A673 (cell line): ENCODE measurements at regions of chr12 and their contacts with region 1.

Region 1: DNA sequence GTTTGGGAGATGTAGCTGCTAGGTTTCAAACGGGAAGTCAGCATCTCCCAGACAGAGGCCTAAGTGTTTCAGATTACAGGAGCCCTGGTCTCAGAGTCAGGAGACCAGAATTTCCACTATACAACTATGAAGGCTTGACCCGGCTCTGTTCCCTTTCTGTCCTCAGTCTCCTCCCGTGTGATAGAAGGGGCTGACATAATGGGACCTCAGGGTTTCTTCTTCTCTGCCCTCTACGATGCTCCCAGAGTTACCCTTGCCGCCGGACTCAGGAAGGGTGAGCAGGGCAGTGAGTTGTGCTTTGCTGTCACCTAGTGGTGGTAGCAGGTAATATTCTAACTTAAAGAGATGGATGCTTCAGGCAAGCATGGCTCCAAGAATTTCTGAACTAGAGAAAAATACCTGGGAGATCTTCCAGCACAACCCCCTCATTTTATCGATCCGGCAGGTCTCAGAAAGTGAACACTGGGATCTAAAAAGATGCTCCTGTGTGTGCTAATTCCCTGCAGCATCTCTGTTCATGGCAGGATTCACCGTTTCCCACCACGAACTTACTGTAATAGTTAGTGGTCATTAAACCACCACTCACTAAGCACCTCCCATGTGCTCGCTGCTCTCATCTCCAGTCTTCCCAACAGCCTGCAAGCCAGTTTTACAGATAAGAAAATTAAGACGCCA is 84.4 kb downstream of the VWF start:
- DNase-seq: peak; percentile 77
- H3K4me3 ChIP-seq: no peak overlapping the region
- H3K27ac ChIP-seq: no peak overlapping the region
- H3K4me1 ChIP-seq: no peaks in the 10 kb centered on the region
- H3K27me3 ChIP-seq: no peaks in the 10 kb centered on the region
- CTCF ChIP-seq: peak; percentile 78

Region 2: GRCh38 chr12:5745265-5745888 is 294.7 kb before region 1 on chr12:
- CTCF ChIA-PET with region 1: interaction called, 4 read pairs
- POLR2A ChIA-PET with region 1: no interaction called
- intact Hi-C with region 1: loop called (anchors 2 kb)
- DNase-seq: peak; percentile 70
- H3K4me3 ChIP-seq: no peak overlapping the region
- H3K27ac ChIP-seq: no peak overlapping the region
- H3K4me1 ChIP-seq: no peaks in the 10 kb centered on the region
- H3K27me3 ChIP-seq: no peaks in the 10 kb centered on the region
- CTCF ChIP-seq: peak; percentile 86

Region 3: DNA sequence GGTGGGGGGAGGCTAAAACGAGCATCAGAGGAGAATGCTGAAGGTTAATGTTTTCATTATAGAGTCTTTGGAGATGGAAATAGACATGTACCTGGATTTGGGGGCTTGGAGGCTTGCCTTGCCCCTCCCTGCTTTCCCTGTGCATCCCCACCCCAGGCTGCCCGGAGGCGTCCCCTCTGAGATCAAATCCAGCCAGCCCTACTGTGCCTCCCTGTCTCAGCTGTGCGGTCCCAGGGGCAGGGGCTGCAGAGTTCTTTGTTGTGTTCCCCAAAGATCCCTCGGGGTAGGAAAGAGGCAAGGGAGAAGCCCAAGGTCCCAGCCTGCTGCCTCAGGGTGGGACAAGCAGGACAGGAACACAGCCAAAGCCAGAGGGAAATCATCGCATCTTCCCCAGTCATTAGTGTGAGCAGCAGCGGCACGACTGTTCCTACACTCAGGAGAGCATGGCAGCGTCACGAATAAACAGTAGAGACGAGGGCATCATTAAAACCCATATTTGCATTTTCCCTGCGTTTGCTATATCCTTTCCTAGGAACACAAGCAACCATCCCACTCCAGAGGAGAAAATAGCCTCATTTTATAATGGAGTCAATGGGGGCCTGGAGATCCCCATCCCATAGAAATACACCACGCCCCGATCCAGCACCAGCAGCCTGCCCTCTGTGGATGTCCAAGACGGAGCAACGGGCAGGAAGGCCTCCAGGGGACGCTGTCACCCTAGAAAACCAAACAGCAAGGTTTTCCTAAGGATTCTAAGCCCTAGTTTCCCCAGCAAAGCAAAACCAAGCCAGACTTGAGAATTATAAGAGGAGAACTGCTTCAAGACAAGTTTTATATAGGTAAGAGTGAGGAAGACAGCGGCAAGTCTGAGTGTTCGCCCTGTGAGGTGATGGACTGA is 127.3 kb before region 1 on chr12:
- CTCF ChIA-PET with region 1: no interaction called
- POLR2A ChIA-PET with region 1: no interaction called
- intact Hi-C with region 1: loop called (anchors 10 kb)
- DNase-seq: peak; percentile 24
- H3K4me3 ChIP-seq: no peak overlapping the region
- H3K27ac ChIP-seq: no peak overlapping the region
- H3K4me1 ChIP-seq: no peaks in the 10 kb centered on the region
- H3K27me3 ChIP-seq: peaks cover 48% of the 10 kb centered on the region
- CTCF ChIP-seq: peak; percentile 58

Region 4: DNA sequence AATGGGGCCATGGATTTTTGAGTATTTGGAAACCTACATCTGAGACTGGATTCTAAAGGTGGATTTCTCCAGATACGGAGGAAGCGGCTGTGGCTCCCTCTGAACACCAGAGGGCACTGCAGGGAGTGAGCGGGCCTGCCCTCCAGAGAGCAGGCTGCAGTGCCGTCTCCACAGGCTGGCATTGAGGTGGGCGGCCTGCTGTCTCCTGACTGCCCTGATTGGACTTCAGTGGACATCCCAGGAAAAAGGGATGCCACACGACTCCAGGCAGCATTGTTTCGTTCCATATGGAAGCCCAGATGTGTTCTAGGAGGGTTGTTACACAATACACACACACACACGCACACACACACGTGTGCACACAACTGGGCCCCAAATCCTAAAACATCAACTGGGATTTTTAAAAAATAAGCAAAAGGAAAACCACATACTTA is 74.1 kb before region 1 on chr12:
- CTCF ChIA-PET with region 1: interaction called, 3 read pairs
- POLR2A ChIA-PET with region 1: no interaction called
- intact Hi-C with region 1: loop called (anchors 2 kb)
- DNase-seq: peak; percentile 73
- H3K4me3 ChIP-seq: no peak overlapping the region
- H3K27ac ChIP-seq: no peak overlapping the region
- H3K4me1 ChIP-seq: peaks cover 16% of the 10 kb centered on the region
- H3K27me3 ChIP-seq: no peaks in the 10 kb centered on the region
- CTCF ChIP-seq: peak; percentile 90

Region 5: DNA sequence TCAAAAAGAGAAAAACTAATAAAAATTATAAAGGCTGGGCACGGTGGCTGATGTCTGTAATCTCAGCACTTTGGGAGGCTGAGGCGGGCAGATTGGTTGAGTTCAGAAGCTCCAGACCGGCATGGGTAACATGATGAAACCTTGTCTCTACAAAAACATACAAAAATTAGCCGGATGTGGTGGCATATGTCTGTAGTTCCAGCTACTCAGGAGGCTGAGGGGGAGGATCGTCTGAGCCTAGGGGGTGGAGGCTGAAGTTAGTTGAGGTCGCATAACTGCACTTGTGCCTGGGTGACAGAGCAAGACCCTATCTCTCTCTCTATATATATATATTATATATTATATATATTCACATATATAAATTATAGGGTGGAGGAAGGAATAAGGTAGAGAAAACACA is 62.5 kb before region 1 on chr12:
- CTCF ChIA-PET with region 1: no interaction called
- POLR2A ChIA-PET with region 1: no interaction called
- intact Hi-C with region 1: no loop called
- DNase-seq: no peak
- H3K4me3 ChIP-seq: no peak overlapping the region
- H3K27ac ChIP-seq: no peak overlapping the region
- H3K4me1 ChIP-seq: no peaks in the 10 kb centered on the region
- H3K27me3 ChIP-seq: no peaks in the 10 kb centered on the region
- CTCF ChIP-seq: no peak

Region 6: GRCh38 chr12:5988659-5989116 is 51.3 kb before region 1 on chr12:
- CTCF ChIA-PET with region 1: interaction called, 34 read pairs
- POLR2A ChIA-PET with region 1: no interaction called
- intact Hi-C with region 1: loop called (anchors 1 kb)
- DNase-seq: peak; percentile 72
- H3K4me3 ChIP-seq: no peak overlapping the region
- H3K27ac ChIP-seq: no peak overlapping the region
- H3K4me1 ChIP-seq: no peaks in the 10 kb centered on the region
- H3K27me3 ChIP-seq: no peaks in the 10 kb centered on the region
- CTCF ChIP-seq: peak; percentile 97